A673 (cell line): ENCODE measurements at regions of chr1 and their contacts with region 1.

Region 1: DNA sequence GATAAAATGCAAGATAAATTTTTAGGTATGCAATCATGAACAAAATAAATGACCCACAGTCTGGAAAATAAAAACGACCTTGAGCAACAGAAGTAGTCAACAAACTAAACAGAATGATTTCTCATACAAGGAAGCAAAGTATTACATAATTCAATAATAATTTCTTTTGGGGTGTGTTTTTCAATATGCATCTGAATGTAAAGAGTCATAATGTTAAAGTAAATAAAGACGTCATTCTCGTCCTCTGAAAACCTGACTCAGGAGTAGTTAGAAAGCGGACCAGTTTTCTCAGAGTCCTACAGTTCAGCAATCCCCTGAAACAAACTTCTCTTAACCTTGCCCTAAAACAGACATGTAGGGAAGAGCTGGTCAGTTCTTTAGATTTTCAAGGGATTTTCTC is 18.6 kb downstream of the CDC42BPA start:
- DNase-seq: no peak
- H3K4me3 ChIP-seq: no peak overlapping the region
- H3K27ac ChIP-seq: no peak overlapping the region
- H3K4me1 ChIP-seq: peaks cover 18% of the 10 kb centered on the region
- H3K27me3 ChIP-seq: no peaks in the 10 kb centered on the region
- CTCF ChIP-seq: no peak

Region 2: GRCh38 chr1:227253065-227253464 is 46.6 kb before region 1 on chr1:
- CTCF ChIA-PET with region 1: no interaction called
- POLR2A ChIA-PET with region 1: no interaction called
- intact Hi-C with region 1: loop called (anchors 5 kb)
- DNase-seq: no peak
- H3K4me3 ChIP-seq: no peak overlapping the region
- H3K27ac ChIP-seq: no peak overlapping the region
- H3K4me1 ChIP-seq: no peaks in the 10 kb centered on the region
- H3K27me3 ChIP-seq: no peaks in the 10 kb centered on the region
- CTCF ChIP-seq: no peak

Region 3: GRCh38 chr1:227273557-227273956 is 26.1 kb before region 1 on chr1:
- CTCF ChIA-PET with region 1: no interaction called
- POLR2A ChIA-PET with region 1: no interaction called
- intact Hi-C with region 1: no loop called
- DNase-seq: peak; percentile 18
- H3K4me3 ChIP-seq: no peak overlapping the region
- H3K27ac ChIP-seq: no peak overlapping the region
- H3K4me1 ChIP-seq: no peaks in the 10 kb centered on the region
- H3K27me3 ChIP-seq: no peaks in the 10 kb centered on the region
- CTCF ChIP-seq: no peak